T-cell (primary cell): ENCODE measurements at regions of chr19 and their contacts with region 1.

Region 1: GRCh38 chr19:1533510-1534150 is 9.8 kb downstream of the PLK5 start:
- DNase-seq: no peak
- ATAC-seq: no peak
- H3K4me3 ChIP-seq: no peak overlapping the region
- H3K4me3 Mint-ChIP-seq: no peak overlapping the region
- H3K27ac ChIP-seq: no peak overlapping the region
- H3K27ac Mint-ChIP-seq: no peak overlapping the region
- H3K4me1 ChIP-seq: no peaks in the 10 kb centered on the region
- H3K4me1 Mint-ChIP-seq: no peaks in the 10 kb centered on the region
- H3K27me3 ChIP-seq: peaks cover 0 to 63% of the 10 kb centered on the region in 2 experiments
- H3K27me3 Mint-ChIP-seq: peaks cover 20 to 29% of the 10 kb centered on the region in 2 donors

Region 2: GRCh38 chr19:1592755-1593500 is 59.3 kb after region 1 on chr19 and contains the start of gene MBD3:
- CTCF ChIA-PET with region 1: no interaction called
- POLR2A ChIA-PET with region 1: no interaction called
- DNase-seq: peak; percentile 64 to 95 (median 80)
- ATAC-seq: peak; percentile 79 to 90 (median 84)
- H3K4me3 ChIP-seq: peak within 1 kb of the TSS; percentile 79 to 83
- H3K4me3 Mint-ChIP-seq: peak within 1 kb of the TSS; percentile 85 to 87 (median 86)
- H3K27ac ChIP-seq: peak within 1 kb of the TSS; percentile 90
- H3K27ac Mint-ChIP-seq: peak within 1 kb of the TSS; percentile 86 to 92
- H3K4me1 ChIP-seq: peaks cover 6 to 29% of the 10 kb centered on the region in 2 experiments
- H3K4me1 Mint-ChIP-seq: peaks cover 17 to 21% (median 18%) of the 10 kb centered on the region in 3 donors
- H3K27me3 ChIP-seq: no peaks in the 10 kb centered on the region
- H3K27me3 Mint-ChIP-seq: no peaks in the 10 kb centered on the region
- total RNA-seq, gene MBD3: 51.8 to 80.3 (median 75.5) TPM

Region 3: DNA sequence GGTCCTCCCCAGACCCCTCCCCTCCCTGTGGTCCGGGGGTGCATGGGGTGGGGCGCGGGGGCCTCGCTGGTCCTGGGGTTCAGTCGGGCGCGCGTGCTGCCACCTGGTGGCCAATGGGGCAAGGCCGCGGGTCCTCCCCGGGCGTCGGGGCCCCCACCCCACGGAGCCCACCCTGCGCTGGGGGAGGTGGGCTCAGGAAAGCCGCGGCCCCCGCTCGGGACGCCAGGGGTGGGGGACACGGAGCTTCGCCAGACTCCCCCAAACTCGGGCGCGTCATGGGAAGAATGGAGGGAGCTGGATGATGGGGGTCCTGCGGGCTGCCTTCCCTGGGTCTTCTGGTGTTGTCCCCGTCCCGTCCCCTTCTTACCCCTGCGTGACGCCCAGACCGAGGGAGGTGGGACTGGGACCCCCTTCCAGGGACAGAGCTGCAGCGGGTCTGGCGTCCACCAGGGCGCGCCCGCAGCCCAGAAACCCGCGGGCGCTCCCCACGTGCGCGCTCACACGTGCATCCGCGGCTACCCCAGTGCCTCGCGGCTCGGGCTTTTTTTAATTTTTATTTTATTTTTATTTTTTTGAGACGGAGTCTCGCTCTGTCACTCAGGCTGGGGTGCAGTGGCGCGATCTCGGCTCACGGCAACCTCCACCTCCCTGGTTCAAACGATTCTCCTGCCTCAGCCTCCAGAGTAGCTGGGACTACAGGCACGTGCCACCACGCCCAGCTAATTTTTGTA is 138.6 kb after region 1 on chr19:
- CTCF ChIA-PET with region 1: interaction called in 1 of 2 experiments, 11 read pairs
- POLR2A ChIA-PET with region 1: no interaction called
- DNase-seq: peak in 27 of 35 experiments; percentile 8 to 73 (median 46)
- ATAC-seq: peak; percentile 62 to 74 (median 72)
- H3K4me3 ChIP-seq: no peak overlapping the region
- H3K4me3 Mint-ChIP-seq: no peak overlapping the region
- H3K27ac ChIP-seq: no peak overlapping the region
- H3K27ac Mint-ChIP-seq: no peak overlapping the region
- H3K4me1 ChIP-seq: peaks cover 2 to 32% of the 10 kb centered on the region in 2 experiments
- H3K4me1 Mint-ChIP-seq: peaks cover 14 to 20% (median 20%) of the 10 kb centered on the region in 3 donors
- H3K27me3 ChIP-seq: peaks cover 5 to 97% of the 10 kb centered on the region in 2 experiments
- H3K27me3 Mint-ChIP-seq: peaks cover 53 to 63% of the 10 kb centered on the region in 2 donors

Region 4: GRCh38 chr19:2041683-2042484 is 508.3 kb after region 1 on chr19:
- CTCF ChIA-PET with region 1: no interaction called
- POLR2A ChIA-PET with region 1: no interaction called
- DNase-seq: peak; percentile 95 to 100 (median 99)
- ATAC-seq: peak; percentile 82 to 94 (median 90)
- H3K4me3 ChIP-seq: peak overlapping the region; percentile 26 to 50
- H3K4me3 Mint-ChIP-seq: peak overlapping the region; percentile 25 to 65 (median 55)
- H3K27ac ChIP-seq: peak overlapping the region; percentile 96
- H3K27ac Mint-ChIP-seq: peak overlapping the region; percentile 73 to 77
- H3K4me1 ChIP-seq: peaks cover 30 to 65% of the 10 kb centered on the region in 2 experiments
- H3K4me1 Mint-ChIP-seq: peaks cover 6 to 38% (median 28%) of the 10 kb centered on the region in 3 donors
- H3K27me3 ChIP-seq: no peaks in the 10 kb centered on the region
- H3K27me3 Mint-ChIP-seq: no peaks in the 10 kb centered on the region